IMR-90 (cell line): ENCODE measurements at regions of chr2 and their contacts with region 1.

Region 1: GRCh38 chr2:40554668-40555285 is 102.9 kb upstream of the SLC8A1 start:
- DNase-seq: peak; percentile 38
- ATAC-seq: peak; percentile 63; the same call in 1 of the 2 replicates
- H3K4me3 ChIP-seq: no peak overlapping the region
- H3K27ac ChIP-seq: no peak overlapping the region
- H3K4me1 ChIP-seq: peaks cover 8% of the 10 kb centered on the region
- H3K27me3 ChIP-seq: no peaks in the 10 kb centered on the region
- CTCF ChIP-seq: peak; percentile 64
- POLR2A ChIP-seq: no peak
- RAD21 ChIP-seq: peak; percentile 64

Region 2: DNA sequence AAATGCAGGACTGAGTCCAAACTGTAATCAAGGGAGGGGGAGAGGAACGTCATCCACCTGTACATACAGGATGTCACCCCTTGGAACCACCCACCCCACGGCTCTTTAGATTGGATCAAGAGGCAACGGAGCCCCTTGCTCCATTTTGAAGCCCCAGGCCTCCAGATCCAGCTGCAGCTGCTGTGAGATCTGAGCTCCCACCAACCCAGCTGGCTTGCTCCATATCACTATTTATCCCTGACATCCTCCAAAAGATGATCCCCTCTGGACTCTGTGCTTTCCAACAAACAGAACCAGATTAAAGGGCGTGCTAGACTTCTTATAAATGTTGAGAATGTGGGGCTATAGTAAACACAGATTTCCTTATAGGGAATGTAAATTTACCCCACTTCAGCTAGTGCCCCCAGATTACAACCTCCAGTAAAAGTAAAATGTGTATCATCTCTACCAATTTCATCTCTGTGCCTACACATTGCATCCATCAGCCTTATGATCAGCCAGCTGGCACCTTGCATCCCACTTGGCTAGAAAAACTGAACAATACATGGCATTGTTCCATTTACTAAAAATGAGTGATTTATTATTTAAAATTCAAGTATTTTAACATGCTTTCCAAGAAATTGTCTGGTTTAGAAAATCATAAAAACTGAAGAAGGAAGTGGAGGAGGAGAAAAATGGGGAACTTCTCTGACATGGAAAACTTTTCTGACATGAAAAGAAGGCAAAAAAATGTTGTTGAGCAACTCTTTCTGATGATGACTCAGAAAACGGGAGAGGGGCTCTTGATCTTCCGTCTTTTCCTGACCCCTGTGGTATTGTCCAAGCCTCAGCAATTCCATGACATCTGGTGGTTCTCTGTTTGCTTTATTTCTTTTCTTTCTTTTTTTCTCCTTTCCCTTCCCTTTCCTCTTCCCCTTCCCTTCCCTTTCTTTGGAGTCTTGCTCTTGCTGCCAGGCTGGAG is 513.1 kb before region 1 on chr2:
- CTCF ChIA-PET with region 1: no interaction called
- POLR2A ChIA-PET with region 1: interaction called, 19 read pairs
- dilution Hi-C with region 1: no loop called
- in situ Hi-C with region 1: no loop called
- intact Hi-C with region 1: no loop called
- DNase-seq: peak; percentile 94
- ATAC-seq: peak; percentile 45
- H3K4me3 ChIP-seq: no peak overlapping the region
- H3K27ac ChIP-seq: peak overlapping the region; percentile 87
- H3K4me1 ChIP-seq: peaks cover 26% of the 10 kb centered on the region
- H3K27me3 ChIP-seq: no peaks in the 10 kb centered on the region
- CTCF ChIP-seq: no peak
- POLR2A ChIP-seq: no peak
- RAD21 ChIP-seq: peak; percentile 5; the same call in 1 of the 2 replicates

Region 3: DNA sequence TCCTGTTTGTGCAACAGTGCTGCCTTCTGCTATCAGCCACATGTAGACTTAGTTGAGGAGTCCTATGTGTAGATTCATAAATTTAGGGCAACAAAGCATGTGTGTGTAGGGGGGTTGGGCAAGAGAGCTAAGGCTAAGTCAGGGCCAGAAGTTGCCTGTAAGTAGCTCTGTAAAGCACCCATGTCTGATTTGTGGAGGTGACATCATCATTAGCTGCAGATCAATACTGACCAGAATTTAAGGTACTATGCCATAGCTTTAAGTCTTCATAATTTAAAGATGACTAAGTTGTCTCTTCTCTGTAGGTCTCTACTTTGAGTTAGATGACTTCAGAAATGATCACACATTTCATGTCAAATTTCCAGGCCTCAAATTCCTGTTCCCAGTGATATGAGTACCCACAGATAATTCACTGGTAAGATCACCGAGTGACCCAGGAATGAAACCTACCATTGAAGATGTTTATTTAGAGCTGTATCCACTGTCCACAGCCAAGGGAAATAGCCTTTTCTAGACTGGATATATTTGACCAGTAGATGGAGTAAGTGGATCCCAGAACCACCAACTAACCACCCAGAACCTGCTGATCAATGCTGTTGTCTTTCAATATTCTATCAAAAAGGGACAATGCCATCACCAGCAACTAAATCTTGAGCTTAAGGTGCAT is 341.8 kb before region 1 on chr2:
- CTCF ChIA-PET with region 1: no interaction called
- POLR2A ChIA-PET with region 1: no interaction called
- dilution Hi-C with region 1: no loop called
- in situ Hi-C with region 1: no loop called
- intact Hi-C with region 1: loop called (anchors 1 kb)
- DNase-seq: peak; percentile 83
- ATAC-seq: peak; percentile 92
- H3K4me3 ChIP-seq: no peak overlapping the region
- H3K27ac ChIP-seq: peak overlapping the region; percentile 45; the same call in 1 of the 2 replicates
- H3K4me1 ChIP-seq: peaks cover 13% of the 10 kb centered on the region
- H3K27me3 ChIP-seq: no peaks in the 10 kb centered on the region
- CTCF ChIP-seq: peak; percentile 65
- POLR2A ChIP-seq: no peak
- RAD21 ChIP-seq: peak; percentile 75

Region 4: DNA sequence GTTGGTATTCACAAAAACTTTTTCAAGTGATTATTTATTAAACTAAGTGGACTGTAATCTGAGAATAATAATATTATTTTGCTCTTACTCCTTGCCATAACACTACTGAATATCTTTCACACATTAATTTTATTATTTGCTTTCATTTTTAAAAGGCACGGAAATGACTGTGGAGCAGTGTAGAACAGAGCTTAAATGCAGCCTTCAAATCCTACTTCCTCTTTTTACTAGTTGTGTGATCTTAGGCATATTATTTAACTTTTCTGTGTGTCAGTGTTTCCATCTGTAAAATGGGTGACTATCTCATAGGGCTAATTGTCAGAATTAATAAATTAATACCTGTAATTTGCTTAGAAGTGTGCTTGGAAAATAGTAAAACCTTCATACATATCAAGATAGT is 47.3 kb before region 1 on chr2:
- CTCF ChIA-PET with region 1: no interaction called
- POLR2A ChIA-PET with region 1: no interaction called
- dilution Hi-C with region 1: no loop called
- in situ Hi-C with region 1: no loop called
- intact Hi-C with region 1: no loop called
- DNase-seq: no peak
- ATAC-seq: no peak
- H3K4me3 ChIP-seq: no peak overlapping the region
- H3K27ac ChIP-seq: no peak overlapping the region
- H3K4me1 ChIP-seq: peaks cover 7% of the 10 kb centered on the region
- H3K27me3 ChIP-seq: no peaks in the 10 kb centered on the region
- CTCF ChIP-seq: no peak
- POLR2A ChIP-seq: no peak
- RAD21 ChIP-seq: no peak